Heart left ventricle (tissue), 16 donors: ENCODE measurements at regions of chr18 and their contacts with region 1.

Region 1: DNA sequence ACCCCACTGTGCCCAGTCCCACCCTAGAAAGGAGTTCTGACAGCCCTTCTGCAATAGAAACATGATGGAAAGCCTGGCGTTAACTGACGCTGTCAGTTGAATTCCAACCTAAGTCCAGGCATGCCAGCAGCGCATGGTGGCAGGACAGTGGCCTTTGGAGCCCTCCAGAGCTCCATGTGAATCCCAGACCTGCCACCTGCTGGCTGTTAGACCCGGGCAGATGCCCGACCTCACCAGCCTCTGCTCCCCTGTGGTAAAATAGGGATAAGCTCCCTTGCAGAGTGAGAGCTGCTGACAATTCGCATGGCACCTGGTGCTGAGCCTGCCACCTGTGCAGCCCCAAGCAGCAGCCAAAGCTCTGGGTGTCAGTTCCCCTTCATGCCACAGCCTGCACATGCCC is 138.6 kb downstream of the LOXHD1 start:
- DNase-seq: peak in 4 of 5 donors; percentile 23 to 68 (median 52)
- ATAC-seq: peak; percentile 84 to 97 (median 94)
- H3K4me3 ChIP-seq: no peak overlapping the region
- H3K27ac ChIP-seq: no peak overlapping the region
- H3K4me1 ChIP-seq: no peaks in the 10 kb centered on the region
- H3K27me3 ChIP-seq: no peaks in the 10 kb centered on the region
- CTCF ChIP-seq: peak in 11 of 12 donors; percentile 31 to 61 (median 49)
- POLR2A ChIP-seq: no peak

Region 2: DNA sequence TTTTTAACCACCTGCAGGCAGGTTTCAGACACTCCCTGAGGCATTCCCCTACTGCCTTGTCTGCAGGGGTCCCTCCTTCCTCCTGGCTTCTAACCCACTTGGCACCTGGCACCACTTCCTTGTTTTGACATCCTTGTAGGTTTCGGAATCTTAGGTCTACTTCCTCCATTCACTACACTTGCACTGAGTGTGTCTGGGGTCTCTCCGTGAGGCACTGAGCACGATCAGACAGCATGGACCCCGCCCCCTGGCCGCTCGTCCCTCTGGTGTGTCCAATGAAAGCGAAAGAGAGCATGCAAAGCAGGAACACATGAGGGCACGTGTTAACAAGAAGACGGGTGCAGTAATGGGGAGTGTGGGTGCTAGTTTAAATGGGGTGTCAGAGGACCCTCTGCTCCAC is 350.5 kb before region 1 on chr18:
- intact Hi-C with region 1: loop called in 2 of 10 experiments (anchors 5 to 10 kb)
- DNase-seq: no peak
- ATAC-seq: peak in 2 of 4 donors; percentile 24 to 34
- H3K4me3 ChIP-seq: peak overlapping the region in 1 of 12 donors; percentile 21
- H3K27ac ChIP-seq: no peak overlapping the region
- H3K4me1 ChIP-seq: peaks cover 0 to 5% (median under 1%) of the 10 kb centered on the region in 12 donors
- H3K27me3 ChIP-seq: no peaks in the 10 kb centered on the region
- CTCF ChIP-seq: no peak
- POLR2A ChIP-seq: no peak

Region 3: DNA sequence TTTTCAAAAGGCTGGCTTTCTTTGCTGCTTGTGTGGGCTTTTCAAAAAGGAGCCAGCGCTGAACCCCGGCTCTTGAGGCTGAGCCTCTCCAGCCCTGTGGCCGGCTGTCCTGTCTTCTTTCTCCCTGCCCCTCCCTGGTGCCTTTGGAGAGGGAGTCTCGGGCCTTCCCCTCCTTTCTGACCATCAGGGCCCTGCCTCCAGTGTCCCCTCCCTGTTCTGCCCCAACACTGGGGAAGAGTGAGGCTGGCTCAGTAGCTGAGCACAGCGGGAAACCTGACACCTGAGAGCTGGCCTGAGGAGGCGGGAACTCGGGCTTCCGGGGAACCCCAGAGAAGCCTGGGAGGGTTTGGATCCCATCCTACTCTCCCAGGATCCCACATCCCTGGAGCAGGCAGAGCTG is 93.5 kb before region 1 on chr18:
- intact Hi-C with region 1: no loop called
- DNase-seq: peak in 1 of 5 donors; percentile 15
- ATAC-seq: no peak
- H3K4me3 ChIP-seq: no peak overlapping the region
- H3K27ac ChIP-seq: no peak overlapping the region
- H3K4me1 ChIP-seq: peaks cover 0 to 12% (median 0%) of the 10 kb centered on the region in 12 donors
- H3K27me3 ChIP-seq: no peaks in the 10 kb centered on the region
- CTCF ChIP-seq: no peak
- POLR2A ChIP-seq: no peak

Region 4: GRCh38 chr18:46464926-46465655 is 53.3 kb before region 1 on chr18:
- intact Hi-C with region 1: loop called in 1 of 10 experiments (anchors 5 kb)
- DNase-seq: no peak
- ATAC-seq: no peak
- H3K4me3 ChIP-seq: no peak overlapping the region
- H3K27ac ChIP-seq: no peak overlapping the region
- H3K4me1 ChIP-seq: peaks cover 0 to 7% (median 0%) of the 10 kb centered on the region in 12 donors
- H3K27me3 ChIP-seq: no peaks in the 10 kb centered on the region
- CTCF ChIP-seq: peak in 2 of 12 donors; percentile 9 to 11
- POLR2A ChIP-seq: no peak